Activated CD8-positive, alpha-beta T cell treated with anti-CD3 and anti-CD28 coated beads for 36 hours (primary cell): ENCODE measurements at regions of chr17 and their contacts with region 1.

Region 1: GRCh38 chr17:76278952-76279741 is 14.0 kb downstream of the UBALD2 start:
- DNase-seq: peak; percentile 90
- ATAC-seq: peak; percentile 85
- H3K4me3 Mint-ChIP-seq: no peak overlapping the region
- H3K27ac Mint-ChIP-seq: no peak overlapping the region
- H3K4me1 Mint-ChIP-seq: peaks cover 26% of the 10 kb centered on the region
- H3K27me3 Mint-ChIP-seq: no peaks in the 10 kb centered on the region
- CTCF ChIP-seq: peak; percentile 98

Region 2: GRCh38 chr17:76111956-76112355 is 167.2 kb before region 1 on chr17:
- CTCF ChIA-PET with region 1: interaction called, 23 read pairs
- POLR2A ChIA-PET with region 1: no interaction called
- intact Hi-C with region 1: no loop called
- DNase-seq: no peak
- ATAC-seq: no peak
- H3K4me3 Mint-ChIP-seq: no peak overlapping the region
- H3K27ac Mint-ChIP-seq: no peak overlapping the region
- H3K4me1 Mint-ChIP-seq: no peaks in the 10 kb centered on the region
- H3K27me3 Mint-ChIP-seq: no peaks in the 10 kb centered on the region
- CTCF ChIP-seq: no peak

Region 3: GRCh38 chr17:76147211-76148014 is 131.7 kb before region 1 on chr17:
- CTCF ChIA-PET with region 1: interaction called, 10 read pairs
- POLR2A ChIA-PET with region 1: interaction called, 4 read pairs
- intact Hi-C with region 1: no loop called
- DNase-seq: no peak
- ATAC-seq: no peak
- H3K4me3 Mint-ChIP-seq: no peak overlapping the region
- H3K27ac Mint-ChIP-seq: peak overlapping the region; percentile 94
- H3K4me1 Mint-ChIP-seq: peaks cover 70% of the 10 kb centered on the region
- H3K27me3 Mint-ChIP-seq: no peaks in the 10 kb centered on the region
- CTCF ChIP-seq: peak; percentile 16

Region 4: GRCh38 chr17:76199469-76199868 is 79.7 kb before region 1 on chr17:
- CTCF ChIA-PET with region 1: interaction called, 12 read pairs
- POLR2A ChIA-PET with region 1: interaction called, 3 read pairs
- intact Hi-C with region 1: no loop called
- DNase-seq: peak; percentile 83
- ATAC-seq: peak; percentile 95
- H3K4me3 Mint-ChIP-seq: no peak overlapping the region
- H3K27ac Mint-ChIP-seq: peak overlapping the region; percentile 91
- H3K4me1 Mint-ChIP-seq: peaks cover 63% of the 10 kb centered on the region
- H3K27me3 Mint-ChIP-seq: no peaks in the 10 kb centered on the region
- CTCF ChIP-seq: no peak

Region 5: DNA sequence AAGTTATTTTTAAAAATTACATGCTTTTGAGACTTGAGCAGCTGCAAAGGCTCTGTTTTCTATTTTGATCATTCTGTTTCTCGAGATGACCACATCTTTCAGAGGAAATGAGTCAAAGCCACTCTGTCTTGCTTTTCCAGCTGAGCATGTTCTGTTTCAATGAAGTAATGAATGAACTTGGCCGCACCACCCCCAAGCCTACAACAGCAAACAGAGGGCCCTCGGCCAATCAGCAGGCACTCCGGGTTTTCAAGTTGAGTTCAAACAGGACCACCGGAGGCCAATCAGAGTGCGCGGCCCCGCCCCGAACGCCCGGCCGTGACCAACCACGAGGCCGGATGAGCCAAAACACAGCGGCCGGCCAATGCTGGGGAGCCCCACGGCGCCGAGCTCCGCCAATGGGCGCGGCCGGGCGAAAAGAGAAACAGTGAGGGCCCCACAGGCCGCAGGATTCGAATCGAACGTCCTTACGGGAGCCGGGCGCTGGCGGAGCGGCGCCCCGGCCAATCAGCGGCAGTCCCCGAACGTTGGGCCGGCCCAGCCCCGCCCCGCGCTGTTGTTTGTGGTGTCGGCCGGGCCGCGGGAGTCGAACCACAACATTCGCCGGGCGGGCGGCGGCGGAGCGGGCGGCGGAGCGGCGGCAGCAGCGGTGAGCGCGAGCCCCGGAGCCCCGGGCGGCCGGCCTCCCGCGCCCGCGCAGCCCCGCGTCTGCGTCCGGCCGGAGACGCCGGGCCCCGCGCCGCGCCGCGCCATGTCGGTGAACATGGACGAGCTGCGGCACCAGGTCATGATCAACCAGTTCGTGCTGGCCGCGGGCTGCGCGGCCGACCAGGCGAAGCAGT is 14.2 kb before region 1 on chr17 and contains the start of gene UBALD2:
- CTCF ChIA-PET with region 1: interaction called, 22 read pairs
- POLR2A ChIA-PET with region 1: interaction called, 960 read pairs
- intact Hi-C with region 1: no loop called
- DNase-seq: peak; percentile 100
- ATAC-seq: peak; percentile 81
- H3K4me3 Mint-ChIP-seq: peak within 1 kb of the TSS; percentile 96
- H3K27ac Mint-ChIP-seq: peak within 1 kb of the TSS; percentile 99
- H3K4me1 Mint-ChIP-seq: peaks cover 44% of the 10 kb centered on the region
- H3K27me3 Mint-ChIP-seq: no peaks in the 10 kb centered on the region
- CTCF ChIP-seq: no peak
- total RNA-seq, gene UBALD2: 267 to 270 TPM